Posterior vena cava (tissue), 2 donors: ENCODE measurements at regions of chr3 and their contacts with region 1.

Region 1: GRCh38 chr3:16239086-16239770 is 25.5 kb downstream of the DPH3 start:
- DNase-seq: no peak

Region 2: DNA sequence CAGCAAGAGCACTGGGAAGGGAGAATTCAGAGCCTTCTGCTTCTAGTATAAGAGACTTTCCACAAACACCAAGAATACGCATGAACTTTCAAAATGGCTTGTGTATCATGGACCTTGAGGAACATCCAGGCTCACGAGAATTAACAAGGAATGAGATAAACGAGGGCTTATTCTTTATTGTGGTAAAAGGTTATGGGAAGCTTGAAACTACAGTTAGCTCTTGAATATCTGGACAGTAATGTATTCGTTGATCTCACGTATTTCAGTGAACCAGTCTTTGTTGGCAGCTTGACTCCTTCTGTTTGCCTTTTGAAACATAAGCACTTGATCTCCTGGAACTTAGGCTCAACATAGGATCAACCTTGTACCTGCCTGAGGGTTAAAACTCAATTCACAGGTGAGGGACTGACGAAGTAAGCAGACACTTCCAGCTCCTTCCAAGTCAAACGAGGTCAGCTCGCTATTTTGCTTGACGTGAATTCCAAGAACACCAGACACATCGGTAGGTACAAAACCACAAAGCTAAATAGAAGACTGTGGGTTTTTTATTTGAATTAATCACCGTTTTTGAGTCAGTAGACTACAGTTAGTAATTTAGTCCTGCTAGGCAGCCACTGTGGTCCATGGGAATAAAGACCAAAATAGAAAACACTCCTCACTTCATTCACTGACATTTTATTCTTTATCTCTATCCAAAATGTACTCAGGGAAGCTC is 33.9 kb before region 1 on chr3:
- intact Hi-C with region 1: loop called in 1 of 2 experiments (anchors 1 kb)
- DNase-seq: no peak

Region 3: DNA sequence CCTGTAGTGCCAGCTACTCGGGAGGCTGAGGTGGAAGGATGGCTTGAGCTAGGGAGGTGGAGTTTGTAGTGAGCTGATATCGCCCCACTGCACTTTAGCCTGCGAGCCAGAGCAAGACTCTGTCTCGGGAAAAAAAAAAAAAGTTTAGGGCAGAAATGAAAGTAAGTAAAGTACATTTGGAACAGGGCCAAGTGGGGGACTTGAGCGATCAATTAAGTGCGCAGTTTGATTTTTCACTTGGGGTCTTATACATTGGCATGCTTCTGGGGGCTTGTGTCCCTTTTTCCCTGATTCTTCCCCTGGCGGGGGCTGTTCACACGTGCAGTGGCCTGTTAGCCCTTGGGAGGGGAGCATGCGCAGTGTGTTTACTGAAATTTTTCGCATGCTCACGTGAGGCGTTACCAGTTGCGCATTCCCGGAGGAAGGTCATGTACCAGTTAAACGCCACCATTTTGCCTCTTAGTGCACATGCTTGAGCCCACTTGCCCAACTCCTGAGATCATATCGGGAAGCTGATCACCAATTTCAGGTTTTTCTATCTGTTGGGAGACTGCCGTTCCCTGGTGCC is 22.8 kb before region 1 on chr3:
- intact Hi-C with region 1: no loop called
- DNase-seq: no peak